Activated CD8-positive, alpha-beta T cell treated with anti-CD3 and anti-CD28 coated beads, Interleukin-2, amount 10 ng/mL, durations not matched to agents 7 days and 5 days (primary cell): ENCODE measurements at regions of chr19 and their contacts with region 1.

Region 1: GRCh38 chr19:37902668-37903067 is 3.7 kb downstream of the WDR87 start:
- DNase-seq: peak; percentile 89
- ATAC-seq: peak; percentile 27
- H3K4me3 Mint-ChIP-seq: no peak overlapping the region
- H3K27ac Mint-ChIP-seq: no peak overlapping the region
- H3K4me1 Mint-ChIP-seq: peaks cover 15% of the 10 kb centered on the region
- H3K27me3 Mint-ChIP-seq: peaks cover 2% of the 10 kb centered on the region

Region 2: GRCh38 chr19:37874784-37875183 is 27.9 kb before region 1 on chr19:
- CTCF ChIA-PET with region 1: no interaction called
- POLR2A ChIA-PET with region 1: no interaction called
- DNase-seq: no peak
- ATAC-seq: no peak
- H3K4me3 Mint-ChIP-seq: no peak overlapping the region
- H3K27ac Mint-ChIP-seq: no peak overlapping the region
- H3K4me1 Mint-ChIP-seq: no peaks in the 10 kb centered on the region
- H3K27me3 Mint-ChIP-seq: no peaks in the 10 kb centered on the region

Region 3: GRCh38 chr19:37938353-37938752 is 35.7 kb after region 1 on chr19:
- CTCF ChIA-PET with region 1: no interaction called
- POLR2A ChIA-PET with region 1: no interaction called
- DNase-seq: no peak
- ATAC-seq: no peak
- H3K4me3 Mint-ChIP-seq: no peak overlapping the region
- H3K27ac Mint-ChIP-seq: no peak overlapping the region
- H3K4me1 Mint-ChIP-seq: peaks cover 3% of the 10 kb centered on the region
- H3K27me3 Mint-ChIP-seq: no peaks in the 10 kb centered on the region

Region 4: DNA sequence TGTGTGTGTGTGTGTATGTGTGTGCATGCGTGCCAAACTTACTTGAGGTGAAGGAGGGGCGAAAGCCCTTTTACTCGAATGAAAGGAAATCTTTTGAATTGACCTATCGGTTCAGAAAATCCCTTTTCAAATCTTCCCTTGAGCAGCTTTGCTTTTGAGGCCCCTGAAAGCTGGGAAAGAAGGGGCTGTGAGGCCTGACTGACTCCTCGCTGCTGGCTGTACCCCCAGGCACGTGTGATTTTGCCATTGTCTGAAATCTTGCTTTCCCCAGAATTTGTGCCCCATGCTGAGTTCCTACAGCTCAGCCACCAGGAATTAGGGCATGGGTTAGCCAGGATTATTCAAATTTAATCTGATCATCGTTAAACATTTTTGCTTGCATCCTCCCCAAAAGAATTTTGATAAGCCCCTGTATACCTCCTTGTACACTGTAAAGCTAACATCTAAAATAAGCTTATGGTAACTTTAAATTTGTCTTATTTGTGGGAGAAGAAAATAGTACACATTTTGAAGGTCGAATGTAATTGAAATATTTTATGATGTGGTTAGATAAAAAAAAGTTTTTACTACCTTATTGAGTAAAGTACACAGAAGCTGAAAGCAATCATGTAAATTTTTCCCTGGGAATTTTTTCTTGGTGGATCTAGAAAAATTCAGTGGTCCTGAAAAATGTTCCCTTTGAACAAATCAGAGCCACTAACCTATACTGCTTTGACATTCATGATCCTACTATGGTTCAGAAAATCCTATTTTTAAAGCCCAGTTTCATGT is 51.0 kb after region 1 on chr19:
- CTCF ChIA-PET with region 1: no interaction called
- POLR2A ChIA-PET with region 1: no interaction called
- DNase-seq: no peak
- ATAC-seq: no peak
- H3K4me3 Mint-ChIP-seq: no peak overlapping the region
- H3K27ac Mint-ChIP-seq: no peak overlapping the region
- H3K4me1 Mint-ChIP-seq: no peaks in the 10 kb centered on the region
- H3K27me3 Mint-ChIP-seq: no peaks in the 10 kb centered on the region

Region 5: GRCh38 chr19:38049105-38049649 is 146.5 kb after region 1 on chr19:
- CTCF ChIA-PET with region 1: interaction called, 22 read pairs
- POLR2A ChIA-PET with region 1: interaction called, 6 read pairs
- DNase-seq: peak; percentile 77
- ATAC-seq: peak; percentile 93
- H3K4me3 Mint-ChIP-seq: peak overlapping the region; percentile 78
- H3K27ac Mint-ChIP-seq: peak overlapping the region; percentile 97
- H3K4me1 Mint-ChIP-seq: peaks cover 45% of the 10 kb centered on the region
- H3K27me3 Mint-ChIP-seq: no peaks in the 10 kb centered on the region

Region 6: GRCh38 chr19:38115271-38115802 is 212.7 kb after region 1 on chr19:
- CTCF ChIA-PET with region 1: interaction called, 11 read pairs
- POLR2A ChIA-PET with region 1: no interaction called
- DNase-seq: peak; percentile 43
- ATAC-seq: peak; percentile 79
- H3K4me3 Mint-ChIP-seq: no peak overlapping the region
- H3K27ac Mint-ChIP-seq: peak overlapping the region; percentile 91
- H3K4me1 Mint-ChIP-seq: peaks cover 17% of the 10 kb centered on the region
- H3K27me3 Mint-ChIP-seq: no peaks in the 10 kb centered on the region

Region 7: DNA sequence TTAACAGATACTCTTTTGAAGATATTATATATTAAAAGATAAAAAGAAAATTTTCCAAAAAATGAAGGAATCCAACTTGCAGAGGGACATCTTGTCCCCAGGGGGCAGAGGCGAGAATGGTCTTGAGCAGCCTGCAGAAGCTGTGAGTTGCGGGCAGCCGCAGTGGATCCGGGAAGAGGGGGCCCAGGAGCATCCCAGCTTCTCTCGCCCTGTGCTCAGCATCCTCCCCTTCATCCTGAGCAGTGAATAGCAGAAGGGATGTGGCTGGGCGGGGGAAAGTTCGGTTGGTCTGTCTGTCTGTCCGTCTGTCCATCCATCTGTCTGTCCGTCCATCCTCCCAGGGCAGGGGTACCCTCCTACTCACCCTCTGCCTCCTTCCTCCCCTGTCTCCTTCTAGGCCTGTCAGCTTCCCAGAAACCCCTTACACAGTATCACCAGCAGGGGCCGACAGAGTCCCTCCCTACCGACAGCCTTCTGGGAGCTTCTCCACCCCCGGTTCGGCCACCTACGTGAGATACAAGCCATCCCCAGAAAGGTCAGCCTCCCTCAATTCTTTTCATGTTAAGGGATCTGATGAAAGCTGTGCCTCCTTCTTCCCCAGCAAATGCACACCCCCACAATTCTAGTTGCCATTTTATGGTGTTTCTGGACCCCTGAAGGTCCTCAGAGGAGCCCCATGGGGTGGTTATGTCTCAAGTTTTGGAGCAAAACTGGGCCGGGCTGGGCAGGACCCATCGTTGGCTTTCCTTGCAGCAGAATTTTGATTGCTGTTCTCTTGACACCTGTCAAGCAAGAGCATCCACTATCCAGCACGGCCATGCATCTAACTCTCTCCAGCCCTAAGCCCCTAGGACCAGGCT is 239.7 kb after region 1 on chr19:
- CTCF ChIA-PET with region 1: interaction called, 11 read pairs
- POLR2A ChIA-PET with region 1: no interaction called
- DNase-seq: peak; percentile 62
- ATAC-seq: peak; percentile 63
- H3K4me3 Mint-ChIP-seq: no peak overlapping the region
- H3K27ac Mint-ChIP-seq: no peak overlapping the region
- H3K4me1 Mint-ChIP-seq: peaks cover 3% of the 10 kb centered on the region
- H3K27me3 Mint-ChIP-seq: no peaks in the 10 kb centered on the region

Region 8: DNA sequence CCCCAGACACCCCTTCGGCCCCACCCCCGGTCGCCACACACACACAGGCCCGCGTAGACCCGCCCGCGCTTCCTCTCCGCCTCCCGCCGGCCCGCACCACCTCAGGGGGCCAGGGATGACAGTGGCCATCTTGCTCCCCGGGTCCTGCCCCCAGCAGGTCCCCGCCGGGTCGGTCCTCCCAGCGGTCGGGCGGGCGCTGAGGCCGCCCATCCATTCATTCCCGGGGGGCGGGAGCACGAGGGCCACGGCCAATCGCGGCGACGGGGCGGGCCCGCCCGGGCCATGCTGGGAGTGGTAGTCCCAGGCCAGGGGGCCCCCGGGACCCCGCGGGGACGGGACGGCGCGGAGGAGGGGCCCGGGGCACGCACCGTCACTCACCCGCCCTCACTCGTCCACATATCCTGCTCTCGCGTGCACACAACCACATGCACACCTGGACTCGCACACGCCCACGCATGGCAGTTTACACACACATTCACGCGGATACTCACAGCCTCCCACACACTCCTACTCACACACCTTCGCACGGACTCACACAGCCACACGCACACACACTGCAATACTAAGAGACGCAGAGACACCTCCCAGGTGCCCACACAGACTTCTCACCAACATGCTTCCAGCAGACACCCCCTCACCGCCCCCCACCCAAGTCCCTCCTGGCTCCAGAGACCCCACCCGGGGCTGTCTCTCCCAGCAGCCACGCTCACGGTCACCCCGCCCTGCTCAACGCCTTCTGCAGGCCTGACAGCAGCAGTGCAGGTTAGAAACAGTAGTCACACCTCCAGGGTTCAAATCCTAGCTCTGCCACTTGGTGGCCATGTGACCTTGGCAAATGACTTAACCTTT is 321.6 kb after region 1 on chr19 and contains the start of gene DPF1:
- CTCF ChIA-PET with region 1: interaction called, 10 read pairs
- POLR2A ChIA-PET with region 1: no interaction called
- DNase-seq: peak; percentile 59
- ATAC-seq: peak; percentile 81
- H3K4me3 Mint-ChIP-seq: peak within 1 kb of the TSS; percentile 63
- H3K27ac Mint-ChIP-seq: no peak within 1 kb of the TSS
- H3K4me1 Mint-ChIP-seq: peaks cover 12% of the 10 kb centered on the region
- H3K27me3 Mint-ChIP-seq: peaks cover 57% of the 10 kb centered on the region
- total RNA-seq, gene DPF1: 0.16 to 0.29 TPM

Region 9: GRCh38 chr19:38245826-38246498 is 343.3 kb after region 1 on chr19:
- CTCF ChIA-PET with region 1: interaction called, 11 read pairs
- POLR2A ChIA-PET with region 1: no interaction called
- DNase-seq: no peak
- ATAC-seq: no peak
- H3K4me3 Mint-ChIP-seq: no peak overlapping the region
- H3K27ac Mint-ChIP-seq: no peak overlapping the region
- H3K4me1 Mint-ChIP-seq: peaks cover 2% of the 10 kb centered on the region
- H3K27me3 Mint-ChIP-seq: no peaks in the 10 kb centered on the region